CD8-positive, alpha-beta T cell (primary cell): ENCODE measurements at regions of chr4 and their contacts with region 1.

Region 1: DNA sequence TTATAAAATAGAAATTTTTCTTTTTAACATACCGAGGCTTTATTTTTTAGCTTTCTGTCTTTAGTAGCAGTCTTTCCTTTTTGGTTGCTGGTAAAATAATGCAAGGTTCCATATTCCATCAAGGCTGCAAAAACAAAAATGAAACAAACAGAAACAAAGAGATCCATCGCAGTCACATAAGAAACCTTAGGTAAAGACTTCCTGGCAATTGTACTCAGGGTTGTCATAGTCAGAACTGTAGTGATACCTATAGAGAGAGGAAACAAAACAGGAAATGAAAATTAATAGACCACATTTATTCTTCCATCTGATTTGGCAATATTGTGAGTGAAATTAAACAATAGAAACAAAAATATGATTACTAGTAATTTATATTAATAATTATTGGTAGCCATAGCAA is 72.5 kb downstream of the GABRG1 start:
- DNase-seq: no peak
- ATAC-seq: no peak
- H3K4me3 ChIP-seq: no peak overlapping the region
- H3K4me3 Mint-ChIP-seq: no peak overlapping the region
- H3K27ac ChIP-seq: no peak overlapping the region
- H3K27ac Mint-ChIP-seq: no peak overlapping the region
- H3K4me1 ChIP-seq: no peaks in the 10 kb centered on the region
- H3K4me1 Mint-ChIP-seq: no peaks in the 10 kb centered on the region
- H3K27me3 ChIP-seq: no peaks in the 10 kb centered on the region
- H3K27me3 Mint-ChIP-seq: no peaks in the 10 kb centered on the region
- CTCF ChIP-seq: no peak

Region 2: GRCh38 chr4:47374477-47374876 is 1323.1 kb after region 1 on chr4:
- CTCF ChIA-PET with region 1: no interaction called
- POLR2A ChIA-PET with region 1: no interaction called
- intact Hi-C with region 1: loop called in 1 of 2 experiments (anchors 10 kb)
- DNase-seq: no peak
- ATAC-seq: no peak
- H3K4me3 ChIP-seq: no peak overlapping the region
- H3K4me3 Mint-ChIP-seq: no peak overlapping the region
- H3K27ac ChIP-seq: no peak overlapping the region
- H3K27ac Mint-ChIP-seq: no peak overlapping the region
- H3K4me1 ChIP-seq: no peaks in the 10 kb centered on the region
- H3K4me1 Mint-ChIP-seq: no peaks in the 10 kb centered on the region
- H3K27me3 ChIP-seq: no peaks in the 10 kb centered on the region
- H3K27me3 Mint-ChIP-seq: peaks cover 15% of the 10 kb centered on the region
- CTCF ChIP-seq: no peak